Activated naive CD4-positive, alpha-beta T cell treated with anti-CD3 and anti-CD28 coated beads, Interleukin-2, amount 10 ng/mL, durations not matched to agents 7 days and 5 days (primary cell): ENCODE measurements at regions of chr11 and their contacts with region 1.

Region 1: GRCh38 chr11:75896843-75897419 is 81.9 kb downstream of the UVRAG start:
- DNase-seq: no peak
- H3K4me3 Mint-ChIP-seq: no peak overlapping the region
- H3K27ac Mint-ChIP-seq: no peak overlapping the region
- H3K4me1 Mint-ChIP-seq: peaks cover 1% of the 10 kb centered on the region
- H3K27me3 Mint-ChIP-seq: no peaks in the 10 kb centered on the region

Region 2: GRCh38 chr11:75582895-75583717 is 313.8 kb before region 1 on chr11:
- CTCF ChIA-PET with region 1: no interaction called
- DNase-seq: peak; percentile 77
- H3K4me3 Mint-ChIP-seq: peak overlapping the region; percentile 75
- H3K27ac Mint-ChIP-seq: peak overlapping the region; percentile 69
- H3K4me1 Mint-ChIP-seq: peaks cover 25% of the 10 kb centered on the region
- H3K27me3 Mint-ChIP-seq: peaks cover 33% of the 10 kb centered on the region

Region 3: GRCh38 chr11:75706260-75706729 is 190.6 kb before region 1 on chr11:
- CTCF ChIA-PET with region 1: no interaction called
- DNase-seq: peak; percentile 73
- H3K4me3 Mint-ChIP-seq: no peak overlapping the region
- H3K27ac Mint-ChIP-seq: no peak overlapping the region
- H3K4me1 Mint-ChIP-seq: no peaks in the 10 kb centered on the region
- H3K27me3 Mint-ChIP-seq: peaks cover 15% of the 10 kb centered on the region

Region 4: DNA sequence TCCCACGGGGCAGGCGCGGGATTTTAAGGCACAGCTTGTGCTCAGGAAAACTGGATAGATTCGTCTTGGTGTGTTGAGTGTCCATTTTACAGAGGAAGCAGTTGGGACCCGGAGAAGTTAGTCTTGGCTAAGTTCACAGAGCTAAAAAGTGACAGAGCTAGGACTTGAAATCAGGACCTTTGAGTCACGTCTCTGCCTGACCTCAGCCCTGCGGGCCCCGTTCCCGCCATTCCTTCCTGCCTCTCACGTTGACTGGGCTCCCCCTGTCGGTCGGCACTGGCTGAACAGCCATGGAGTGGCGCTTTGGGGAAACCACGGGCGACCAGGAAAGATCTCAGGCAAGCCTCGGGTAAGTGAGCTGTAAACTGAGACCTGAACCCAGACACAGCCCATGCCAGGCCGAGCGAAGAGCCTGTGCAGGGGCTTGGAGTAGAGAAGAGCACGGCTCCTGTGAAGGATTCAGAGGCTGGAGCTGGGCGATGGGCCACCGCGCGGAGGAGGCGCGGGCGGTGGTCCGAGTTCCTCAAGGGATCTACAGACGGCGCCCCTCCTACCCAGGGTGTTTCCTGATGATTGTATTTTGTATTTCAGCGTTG is 255.3 kb after region 1 on chr11:
- CTCF ChIA-PET with region 1: interaction called, 91 read pairs
- DNase-seq: peak; percentile 88
- H3K4me3 Mint-ChIP-seq: peak overlapping the region; percentile 45
- H3K27ac Mint-ChIP-seq: no peak overlapping the region
- H3K4me1 Mint-ChIP-seq: peaks cover 24% of the 10 kb centered on the region
- H3K27me3 Mint-ChIP-seq: peaks cover 64% of the 10 kb centered on the region

Region 5: DNA sequence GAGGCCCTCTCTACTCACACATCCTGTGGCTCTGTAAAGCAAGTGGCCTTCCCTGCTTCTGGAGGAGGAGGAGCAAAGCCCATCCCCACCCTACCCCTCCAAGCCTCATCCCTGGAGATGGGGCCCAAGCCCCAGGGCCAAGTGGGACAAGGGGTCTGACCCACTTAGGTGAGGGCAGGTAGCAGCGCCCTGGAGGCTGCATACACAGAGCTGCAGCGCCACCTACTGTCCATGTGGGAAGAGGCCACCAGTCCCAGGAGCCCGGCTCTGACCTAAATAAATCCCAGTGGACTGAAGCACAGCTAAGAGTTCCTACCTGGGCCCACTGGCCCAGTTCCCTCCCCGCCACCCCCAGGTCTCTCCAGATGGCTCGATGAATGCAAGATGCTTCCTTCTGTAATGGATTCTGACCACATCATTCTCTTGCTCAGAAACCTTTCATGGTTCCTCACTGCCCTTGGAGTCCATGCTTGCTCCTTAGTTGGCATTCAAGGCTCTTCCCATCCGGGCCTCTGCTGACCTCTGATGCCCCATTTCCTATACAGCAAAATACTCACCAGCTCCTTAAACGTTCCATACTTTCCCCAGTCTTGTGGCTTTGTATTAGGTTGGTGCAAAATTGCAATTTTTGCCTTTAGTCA is 421.9 kb after region 1 on chr11:
- CTCF ChIA-PET with region 1: interaction called, 13 read pairs
- DNase-seq: peak; percentile 89
- H3K4me3 Mint-ChIP-seq: no peak overlapping the region
- H3K27ac Mint-ChIP-seq: no peak overlapping the region
- H3K4me1 Mint-ChIP-seq: peaks cover 18% of the 10 kb centered on the region
- H3K27me3 Mint-ChIP-seq: peaks cover 76% of the 10 kb centered on the region